HAP-1 (cell line): ENCODE measurements at regions of chr4 and their contacts with region 1.

Region 1: DNA sequence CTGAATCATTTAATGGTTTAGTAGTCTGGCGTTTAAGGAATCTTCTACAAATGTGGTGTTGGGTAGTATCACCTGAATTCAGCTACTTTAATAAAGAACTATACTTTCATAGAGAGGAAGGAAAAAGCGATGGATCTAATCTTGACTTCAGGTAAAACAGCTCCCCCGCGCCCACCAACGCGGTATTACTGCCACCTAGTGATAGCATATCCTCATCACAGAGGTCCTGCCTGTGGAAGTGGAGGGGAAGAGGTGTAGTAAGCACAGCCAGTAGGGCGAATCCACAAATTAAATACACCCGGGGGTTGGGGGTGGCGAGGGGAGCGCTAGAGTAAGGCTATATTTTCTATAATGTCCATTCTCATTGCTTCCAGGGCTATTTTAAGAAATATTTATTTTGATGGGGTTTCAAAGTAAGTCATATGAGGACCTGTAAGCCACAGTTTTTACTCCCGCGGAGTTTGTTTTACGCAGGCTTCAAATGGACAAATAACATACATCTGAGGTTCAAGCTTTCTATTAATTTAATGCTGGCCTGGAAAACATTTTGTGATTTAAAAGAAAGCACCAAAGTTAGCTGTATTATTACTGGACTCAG is 8.3 kb upstream of the DAPP1 start:
- DNase-seq: peak; percentile 56 to 75
- H3K4me3 ChIP-seq: no peak overlapping the region
- H3K4me1 ChIP-seq: no peaks in the 10 kb centered on the region
- H3K27me3 ChIP-seq: no peaks in the 10 kb centered on the region

Region 2: DNA sequence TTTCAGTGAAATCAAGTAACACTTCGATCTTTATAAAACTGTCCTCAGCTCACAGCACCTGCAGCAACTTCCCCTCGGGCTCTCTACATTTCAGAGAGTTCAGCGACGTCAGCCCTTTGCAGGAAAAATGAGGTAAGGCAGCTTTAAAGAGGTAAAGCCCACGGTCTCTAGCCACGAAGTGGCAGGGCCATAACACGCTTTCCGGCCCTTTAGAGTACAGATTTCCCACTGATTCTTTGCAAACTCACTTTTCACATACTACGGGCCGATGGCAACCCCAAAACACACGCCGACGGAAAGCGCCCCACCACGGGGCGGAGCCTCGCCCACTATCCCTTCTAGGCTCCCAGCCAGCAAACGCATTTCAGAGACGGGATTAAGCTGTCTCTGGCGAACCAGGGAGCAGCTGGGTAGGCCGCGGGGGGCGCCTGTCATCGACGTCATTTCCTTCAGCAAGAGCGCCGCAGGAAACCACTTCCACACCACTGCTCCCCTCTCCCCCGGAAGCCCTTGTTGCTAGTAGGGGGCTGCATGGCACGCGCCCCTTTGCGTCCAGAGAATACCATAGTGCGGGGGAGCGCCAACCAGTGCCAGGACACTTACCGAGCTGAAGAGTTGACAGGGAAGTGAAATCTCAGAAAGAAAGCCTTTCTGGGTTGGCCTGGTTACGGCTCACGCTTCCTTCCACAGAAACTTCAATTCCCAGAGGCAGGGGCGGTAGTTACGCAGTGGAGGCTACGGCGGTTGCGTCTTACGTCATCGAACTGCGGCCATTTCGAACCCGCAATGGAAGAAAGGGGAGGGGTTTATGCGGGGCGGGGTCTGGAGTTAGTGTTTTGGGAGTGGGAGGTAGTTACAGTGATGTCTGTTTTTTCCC is 244.8 kb before region 1 on chr4 and contains the start of gene TRMT10A:
- in situ Hi-C with region 1: loop called (anchors 5 kb)
- DNase-seq: peak; percentile 96
- H3K4me3 ChIP-seq: peak within 1 kb of the TSS; percentile 69
- H3K4me1 ChIP-seq: no peaks in the 10 kb centered on the region; the same call in 1 of the 2 replicates
- H3K27me3 ChIP-seq: no peaks in the 10 kb centered on the region